Activated CD4-positive, alpha-beta memory T cell treated with anti-CD3 and anti-CD28 coated beads, Interleukin-2, amount 10 ng/mL, durations not matched to agents 7 days and 5 days (primary cell): ENCODE measurements at regions of chr10 and their contacts with region 1.

Region 1: DNA sequence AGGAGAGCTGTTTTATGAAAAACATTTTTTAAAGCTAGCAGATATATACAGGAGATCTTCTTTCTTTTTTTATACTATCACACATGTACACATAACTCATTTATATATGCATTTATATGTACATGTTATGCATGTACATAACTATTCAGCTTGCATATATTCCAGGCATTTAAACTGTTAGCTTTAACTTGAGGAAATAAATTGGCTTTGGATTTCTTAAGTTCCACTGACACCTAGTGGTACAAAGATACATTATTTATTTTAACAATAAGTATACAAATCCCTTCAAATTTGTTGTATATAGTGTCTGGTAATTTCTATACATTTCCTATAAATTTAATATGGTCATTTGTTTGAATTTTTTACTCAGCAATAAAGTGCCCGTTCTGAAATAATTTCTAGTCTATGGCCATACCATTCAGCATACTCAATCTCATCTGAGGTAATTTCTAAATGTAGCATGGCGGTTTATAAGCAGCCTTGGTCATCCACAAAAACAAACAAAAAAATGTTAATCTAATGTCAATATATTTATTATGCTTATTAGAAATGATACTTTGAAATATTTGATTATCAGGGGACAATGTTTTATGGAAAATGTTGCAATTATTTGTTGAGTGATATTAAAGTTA is 11.6 kb downstream of the ZDHHC6 start:
- DNase-seq: no peak
- H3K4me3 Mint-ChIP-seq: no peak overlapping the region
- H3K27ac Mint-ChIP-seq: no peak overlapping the region
- H3K4me1 Mint-ChIP-seq: no peaks in the 10 kb centered on the region
- H3K27me3 Mint-ChIP-seq: no peaks in the 10 kb centered on the region

Region 2: GRCh38 chr10:112307358-112308124 is 127.6 kb before region 1 on chr10:
- CTCF ChIA-PET with region 1: interaction called, 12 read pairs
- POLR2A ChIA-PET with region 1: no interaction called
- DNase-seq: peak; percentile 31
- H3K4me3 Mint-ChIP-seq: no peak overlapping the region
- H3K27ac Mint-ChIP-seq: no peak overlapping the region
- H3K4me1 Mint-ChIP-seq: no peaks in the 10 kb centered on the region
- H3K27me3 Mint-ChIP-seq: peaks cover 34% of the 10 kb centered on the region

Region 3: DNA sequence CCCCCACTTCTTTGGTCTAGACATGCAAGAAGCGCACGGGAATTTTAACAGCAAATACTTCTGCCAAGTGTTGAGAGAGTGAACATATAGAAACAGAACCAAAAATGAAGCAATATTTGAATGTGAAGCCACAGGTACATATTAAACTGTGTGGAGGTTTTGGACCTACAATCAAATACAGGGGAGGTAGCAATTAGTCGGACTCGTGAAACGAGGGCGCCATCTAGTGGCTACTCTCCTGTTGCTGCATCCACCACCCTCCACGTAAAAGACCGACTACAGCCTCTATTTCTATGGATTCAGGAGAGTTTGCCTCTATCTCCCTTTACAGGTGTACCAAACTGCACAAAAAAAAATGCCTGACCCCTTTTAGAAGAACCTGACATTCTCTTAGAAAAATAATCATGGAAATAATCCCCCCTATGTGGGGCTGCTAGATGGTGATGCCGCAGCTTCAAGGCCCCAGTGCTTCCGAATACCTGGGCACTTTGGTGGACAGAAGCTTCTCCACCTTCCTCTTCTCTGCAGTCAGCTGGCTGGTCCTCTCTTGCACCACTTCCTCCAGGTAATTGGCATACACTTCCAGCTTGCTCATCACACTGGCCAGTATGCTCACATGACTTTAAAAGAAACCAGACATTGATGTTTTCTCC is 120.2 kb before region 1 on chr10:
- CTCF ChIA-PET with region 1: interaction called, 12 read pairs
- POLR2A ChIA-PET with region 1: no interaction called
- DNase-seq: peak; percentile 74
- H3K4me3 Mint-ChIP-seq: no peak overlapping the region
- H3K27ac Mint-ChIP-seq: no peak overlapping the region
- H3K4me1 Mint-ChIP-seq: no peaks in the 10 kb centered on the region
- H3K27me3 Mint-ChIP-seq: peaks cover 35% of the 10 kb centered on the region

Region 4: DNA sequence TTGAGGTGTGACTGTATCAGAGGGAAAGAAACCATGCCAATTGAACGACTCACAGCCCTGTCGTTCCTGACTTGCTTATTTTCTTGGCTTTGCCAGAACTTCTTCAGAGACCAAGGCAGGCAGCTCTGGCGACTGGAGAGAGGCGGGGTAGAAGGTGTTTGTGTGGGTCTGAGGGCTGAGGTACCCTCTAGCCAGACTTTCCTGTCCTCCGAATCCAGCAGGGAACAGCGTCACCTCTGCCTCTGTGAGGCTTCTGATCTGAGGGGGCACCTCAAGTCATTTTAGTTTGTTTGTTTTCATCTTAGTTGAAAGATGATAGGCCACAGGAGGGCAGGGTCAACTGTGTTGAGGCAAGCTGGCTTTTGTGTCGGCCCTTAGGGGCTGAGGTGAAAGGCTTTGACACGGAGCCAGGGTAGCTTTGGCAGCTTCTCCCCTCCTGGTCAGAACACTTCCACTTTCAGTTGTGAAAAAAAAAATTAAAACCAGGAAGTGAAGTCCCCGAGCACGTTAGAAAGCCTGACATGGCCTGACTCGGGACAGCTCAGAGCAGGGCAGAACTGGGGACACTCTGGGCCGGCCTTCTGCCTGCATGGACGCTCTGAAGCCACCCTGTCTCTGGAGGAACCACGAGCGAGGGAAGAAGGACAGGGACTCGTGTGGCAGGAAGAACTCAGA is 59.2 kb before region 1 on chr10:
- CTCF ChIA-PET with region 1: interaction called, 15 read pairs
- POLR2A ChIA-PET with region 1: interaction called, 5 read pairs
- DNase-seq: peak; percentile 62
- H3K4me3 Mint-ChIP-seq: peak overlapping the region; percentile 100
- H3K27ac Mint-ChIP-seq: peak overlapping the region; percentile 99
- H3K4me1 Mint-ChIP-seq: peaks cover 57% of the 10 kb centered on the region
- H3K27me3 Mint-ChIP-seq: no peaks in the 10 kb centered on the region

Region 5: DNA sequence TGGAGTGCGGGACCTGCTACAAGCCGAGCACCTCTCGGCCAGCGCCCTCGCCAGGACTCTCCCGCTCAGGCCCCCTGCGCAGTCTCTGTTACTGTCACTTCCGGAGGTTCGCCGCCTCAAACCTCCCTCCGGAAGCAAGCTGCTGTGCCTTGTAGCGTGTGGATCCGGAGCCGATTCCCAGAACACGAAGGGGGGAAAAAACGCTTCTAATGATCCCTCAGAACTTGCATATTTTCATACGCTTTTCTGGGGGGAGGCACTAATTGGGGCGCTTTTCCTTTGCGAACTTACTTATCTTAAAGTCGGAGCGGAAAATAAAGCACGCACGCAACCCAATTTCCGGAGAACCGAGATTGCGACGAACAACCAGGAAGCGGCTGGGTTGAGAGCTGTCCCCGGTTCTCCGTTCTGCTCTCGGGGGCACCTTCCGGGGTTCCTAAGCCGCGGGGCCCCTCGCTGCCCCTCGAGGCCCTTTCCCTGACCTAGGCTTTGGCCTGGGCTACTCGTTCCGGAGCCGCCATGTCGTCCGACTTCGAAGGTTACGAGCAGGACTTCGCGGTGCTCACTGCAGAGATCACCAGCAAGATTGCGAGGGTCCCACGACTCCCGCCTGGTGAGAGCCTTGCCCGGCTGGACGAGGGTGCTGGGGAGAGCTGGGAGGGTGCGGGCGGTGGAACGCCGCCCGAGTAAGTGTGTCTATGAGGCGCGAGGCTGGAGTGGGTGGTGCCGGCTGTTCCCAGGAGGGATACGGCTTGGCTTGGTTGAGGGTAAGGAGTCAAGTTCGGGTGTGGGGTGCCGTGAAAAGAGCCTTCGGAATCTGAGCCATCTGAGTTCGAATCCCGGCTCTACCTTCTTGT is 12.0 kb after region 1 on chr10 and contains the starts of genes VTI1A and ZDHHC6:
- CTCF ChIA-PET with region 1: interaction called, 7 read pairs
- POLR2A ChIA-PET with region 1: interaction called, 14 read pairs
- DNase-seq: peak; percentile 86
- H3K4me3 Mint-ChIP-seq: peak within 1 kb of the TSS; percentile 87
- H3K27ac Mint-ChIP-seq: peak within 1 kb of the TSS; percentile 86
- H3K4me1 Mint-ChIP-seq: peaks cover 56% of the 10 kb centered on the region
- H3K27me3 Mint-ChIP-seq: no peaks in the 10 kb centered on the region
- total RNA-seq, gene VTI1A: 32.9 to 37.3 TPM
- total RNA-seq, gene ZDHHC6: 46.3 to 47.0 TPM

Region 6: GRCh38 chr10:112471878-112472487 is 36.9 kb after region 1 on chr10:
- CTCF ChIA-PET with region 1: interaction called, 11 read pairs
- POLR2A ChIA-PET with region 1: no interaction called
- DNase-seq: no peak
- H3K4me3 Mint-ChIP-seq: no peak overlapping the region
- H3K27ac Mint-ChIP-seq: no peak overlapping the region
- H3K4me1 Mint-ChIP-seq: peaks cover 3% of the 10 kb centered on the region
- H3K27me3 Mint-ChIP-seq: no peaks in the 10 kb centered on the region

Region 7: DNA sequence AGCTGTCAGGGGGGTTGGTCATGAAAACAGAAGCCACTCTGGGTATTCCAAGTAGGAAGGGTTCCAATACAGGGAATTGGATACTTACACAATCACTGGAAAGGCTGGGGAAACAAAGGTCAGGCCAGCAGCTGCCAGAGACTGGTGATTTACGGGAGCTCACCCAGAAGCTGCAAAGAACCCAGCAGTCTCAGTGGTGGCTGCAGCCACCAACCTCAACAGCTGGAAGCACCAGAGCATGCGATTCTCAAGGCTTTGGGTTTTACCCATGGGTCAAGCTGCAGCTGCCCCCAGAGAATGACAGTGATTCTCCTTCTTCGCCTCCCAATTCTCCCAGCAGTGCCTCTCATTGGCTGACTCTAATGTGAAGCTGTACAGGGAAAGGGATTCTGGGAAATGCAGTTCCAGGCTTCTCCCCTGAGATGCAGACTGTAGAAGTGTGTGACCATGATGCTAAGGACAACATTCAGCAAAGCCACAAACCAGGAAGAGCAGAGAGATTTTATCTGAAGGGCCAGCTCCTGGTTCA is 407.8 kb after region 1 on chr10:
- CTCF ChIA-PET with region 1: no interaction called
- POLR2A ChIA-PET with region 1: no interaction called
- DNase-seq: no peak
- H3K4me3 Mint-ChIP-seq: no peak overlapping the region
- H3K27ac Mint-ChIP-seq: no peak overlapping the region
- H3K4me1 Mint-ChIP-seq: no peaks in the 10 kb centered on the region
- H3K27me3 Mint-ChIP-seq: no peaks in the 10 kb centered on the region